ENCODE measurements at regions of chr2 and their contacts with region 1.

Region 1: DNA sequence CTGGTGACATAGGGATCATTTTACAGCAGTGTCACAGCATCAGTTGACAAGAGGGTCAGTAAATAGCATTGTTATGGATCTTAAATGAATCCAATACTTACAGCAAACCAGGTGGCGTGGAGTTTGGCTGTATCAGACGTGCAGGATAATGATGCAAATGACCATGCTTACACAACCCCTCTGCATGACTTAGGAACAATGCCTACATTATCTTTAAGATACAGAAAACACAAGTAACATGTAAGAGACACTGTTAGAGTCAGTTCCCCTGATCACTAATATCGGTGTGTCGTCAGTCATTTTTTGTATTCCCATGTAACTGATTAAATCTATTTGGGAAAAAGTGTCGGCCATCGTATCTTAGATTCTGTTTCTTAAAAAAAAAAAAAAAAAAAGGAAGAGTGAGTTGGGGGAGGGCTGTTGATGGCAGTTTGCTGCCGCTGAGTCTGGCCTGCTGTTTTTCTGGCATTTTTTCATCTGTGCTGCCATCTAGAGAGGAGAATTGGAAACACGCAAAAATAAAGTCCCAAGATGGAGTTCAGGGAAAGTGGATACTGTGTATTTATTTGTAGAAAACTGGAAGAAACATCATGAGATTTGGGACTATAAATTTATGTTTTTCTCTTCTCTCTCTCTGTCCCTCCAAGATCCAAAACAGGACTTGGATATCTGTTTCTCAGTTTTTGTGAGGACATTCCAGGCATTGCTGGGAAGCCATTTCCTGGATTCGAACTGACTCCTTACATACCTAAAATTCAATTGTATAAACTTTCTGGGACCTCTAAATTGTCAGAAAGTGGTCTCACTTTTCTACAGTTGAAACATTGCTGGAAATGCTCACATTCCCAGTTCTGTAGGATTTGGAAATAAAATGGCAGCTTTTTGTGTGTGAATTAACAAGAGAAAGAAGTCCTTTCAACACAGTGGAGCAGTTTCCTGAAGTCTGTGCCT is 60.3 kb upstream of the AGPS start:
- DNase-seq: peak; percentile 62
- H3K4me3 ChIP-seq: no peak overlapping the region
- H3K27ac ChIP-seq: no peak overlapping the region
- H3K27me3 ChIP-seq: no peaks in the 10 kb centered on the region
- CTCF ChIP-seq: peak; percentile 72

Region 2: GRCh38 chr2:177148477-177149154 is 183.7 kb before region 1 on chr2:
- CTCF ChIA-PET with region 1: interaction called, 16 read pairs
- POLR2A ChIA-PET with region 1: no interaction called
- DNase-seq: no peak
- H3K4me3 ChIP-seq: peak overlapping the region; percentile 61
- H3K27ac ChIP-seq: no peak overlapping the region
- H3K27me3 ChIP-seq: peaks cover 16% of the 10 kb centered on the region
- CTCF ChIP-seq: peak; percentile 97

Region 3: DNA sequence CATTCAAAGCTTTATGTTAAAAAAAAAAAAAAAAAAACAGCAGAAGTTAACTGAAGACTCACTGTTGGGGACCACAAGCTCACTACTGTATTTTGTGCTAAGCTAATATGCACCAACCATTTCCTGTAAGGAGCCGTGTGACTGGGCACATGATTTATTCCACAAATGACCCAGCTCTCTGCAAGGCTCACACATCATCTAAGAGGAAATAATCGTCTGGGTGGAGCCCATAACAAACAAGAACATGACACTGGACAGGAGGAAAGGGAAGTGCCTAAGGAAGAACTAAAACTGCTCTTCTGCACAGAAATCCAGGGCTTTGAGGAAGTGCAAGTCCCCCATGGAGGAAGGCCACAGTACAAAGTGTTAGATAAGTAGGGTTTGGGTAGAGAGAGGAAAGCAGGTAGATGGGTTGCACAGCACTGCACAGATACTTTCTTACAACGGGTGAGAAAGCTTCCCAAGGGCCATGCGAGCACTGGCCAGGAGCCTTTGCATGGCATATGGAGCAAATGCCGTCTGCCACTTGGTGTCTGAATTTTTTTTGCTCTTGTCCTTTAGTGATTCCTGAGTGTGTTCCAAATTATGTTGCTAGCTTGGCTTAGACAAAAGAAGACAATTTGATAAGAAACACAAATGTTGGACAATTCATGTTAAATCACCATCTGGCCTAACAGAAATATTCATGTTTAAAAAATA is 92.2 kb before region 1 on chr2:
- CTCF ChIA-PET with region 1: interaction called, 12 read pairs
- POLR2A ChIA-PET with region 1: no interaction called
- DNase-seq: no peak
- H3K4me3 ChIP-seq: no peak overlapping the region
- H3K27ac ChIP-seq: no peak overlapping the region
- H3K27me3 ChIP-seq: no peaks in the 10 kb centered on the region
- CTCF ChIP-seq: no peak

Region 4: DNA sequence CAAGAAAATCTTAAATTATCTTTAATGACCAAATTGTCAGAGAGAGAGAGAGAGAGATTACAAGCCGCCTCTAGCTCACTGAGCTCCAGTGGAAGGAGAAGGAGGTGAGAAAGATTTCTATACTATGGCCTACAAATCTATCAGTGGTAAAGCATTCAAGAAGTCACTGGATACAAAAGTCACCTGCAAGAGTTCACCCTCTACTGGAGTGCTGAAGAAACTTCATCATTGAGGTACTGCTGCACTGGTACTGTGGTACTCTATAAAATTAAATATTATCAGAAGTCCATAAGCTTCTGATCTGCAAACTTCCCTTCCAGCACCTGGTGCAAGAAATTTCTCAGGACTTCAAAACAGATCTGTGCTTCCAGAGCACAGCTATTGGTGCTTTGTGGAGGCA is 12.0 kb after region 1 on chr2:
- CTCF ChIA-PET with region 1: interaction called, 55 read pairs
- POLR2A ChIA-PET with region 1: no interaction called
- DNase-seq: no peak
- H3K4me3 ChIP-seq: no peak overlapping the region
- H3K27ac ChIP-seq: no peak overlapping the region
- H3K27me3 ChIP-seq: no peaks in the 10 kb centered on the region
- CTCF ChIP-seq: no peak

Region 5: DNA sequence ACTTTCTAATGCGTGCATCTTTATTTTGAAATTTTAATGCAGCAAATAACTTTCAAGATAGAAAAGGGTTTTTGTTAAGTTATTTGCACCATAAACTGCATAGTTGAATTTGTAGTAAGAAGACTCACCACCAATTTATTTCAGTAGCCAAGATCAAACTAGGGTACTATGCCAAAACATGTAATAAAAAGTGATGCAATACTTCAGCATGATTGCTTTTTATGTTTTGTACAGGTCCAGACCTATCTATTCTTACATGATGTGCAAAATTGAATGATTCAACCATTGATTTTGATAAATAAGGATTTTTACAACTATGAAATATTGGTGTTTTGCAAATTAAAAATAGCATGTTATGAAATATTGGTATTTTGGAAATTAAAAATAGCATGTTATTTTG is 87.0 kb after region 1 on chr2:
- CTCF ChIA-PET with region 1: interaction called, 163 read pairs
- POLR2A ChIA-PET with region 1: no interaction called
- DNase-seq: no peak
- H3K4me3 ChIP-seq: no peak overlapping the region
- H3K27ac ChIP-seq: no peak overlapping the region
- H3K27me3 ChIP-seq: no peaks in the 10 kb centered on the region
- CTCF ChIP-seq: no peak

Region 6: DNA sequence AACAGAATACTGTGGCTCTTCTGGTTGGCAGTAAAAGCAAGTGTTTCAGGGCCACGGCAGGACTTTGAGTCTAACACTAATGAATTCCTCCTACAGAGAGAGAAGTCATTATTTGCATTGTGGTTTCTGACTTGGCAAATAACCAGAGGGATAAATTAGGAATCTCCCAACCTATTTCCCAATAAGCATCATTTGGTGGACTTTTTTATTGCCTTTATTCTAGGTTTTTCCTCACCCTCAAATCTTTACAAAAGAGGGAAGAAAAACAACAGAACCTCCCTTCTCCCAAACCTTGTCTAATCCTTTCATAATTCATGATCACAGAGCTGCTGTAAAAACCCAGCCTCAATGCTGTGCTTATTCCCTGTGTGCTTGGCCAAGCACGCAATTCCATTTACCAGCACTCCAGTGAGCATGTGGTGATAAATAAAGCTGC is 239.9 kb after region 1 on chr2:
- CTCF ChIA-PET with region 1: no interaction called
- POLR2A ChIA-PET with region 1: no interaction called
- DNase-seq: no peak
- H3K4me3 ChIP-seq: no peak overlapping the region
- H3K27ac ChIP-seq: no peak overlapping the region
- H3K27me3 ChIP-seq: no peaks in the 10 kb centered on the region
- CTCF ChIP-seq: no peak

Region 7: GRCh38 chr2:177724398-177725287 is 392.3 kb after region 1 on chr2:
- CTCF ChIA-PET with region 1: interaction called, 33 read pairs
- POLR2A ChIA-PET with region 1: no interaction called
- DNase-seq: peak; percentile 7
- H3K4me3 ChIP-seq: no peak overlapping the region
- H3K27ac ChIP-seq: no peak overlapping the region
- H3K27me3 ChIP-seq: peaks cover 8% of the 10 kb centered on the region
- CTCF ChIP-seq: peak; percentile 89